ENCODE measurements at regions of chr11 and their contacts with region 1.

Region 1: DNA sequence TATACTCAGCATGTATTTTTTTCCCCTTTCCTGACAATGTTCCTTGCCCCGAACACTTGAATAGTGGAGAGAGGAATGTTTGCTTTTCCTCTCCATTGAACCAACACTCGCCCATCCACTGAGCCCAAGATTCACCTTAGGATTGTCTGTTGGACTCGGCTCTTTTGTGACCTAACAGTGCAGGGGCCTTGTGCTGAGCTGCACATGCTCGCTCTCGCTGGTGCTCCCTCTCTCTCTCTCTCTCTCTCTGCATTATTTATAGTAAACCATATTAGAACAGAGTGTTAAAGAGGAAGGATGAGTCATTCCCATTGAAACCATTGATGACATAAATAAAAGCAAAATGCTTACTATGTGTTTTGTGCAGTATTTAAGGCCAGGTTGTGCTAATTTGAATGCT is 20.7 kb downstream of the ZBTB16 start:
- DNase-seq: peak; percentile 75
- H3K4me3 Mint-ChIP-seq: peak overlapping the region; percentile 67
- H3K27ac Mint-ChIP-seq: peak overlapping the region; percentile 52
- H3K4me1 Mint-ChIP-seq: peaks cover 78% of the 10 kb centered on the region
- H3K27me3 Mint-ChIP-seq: no peaks in the 10 kb centered on the region
- CTCF ChIP-seq: no peak

Region 2: GRCh38 chr11:114053406-114053805 is 26.8 kb before region 1 on chr11:
- CTCF ChIA-PET with region 1: no interaction called
- POLR2A ChIA-PET with region 1: no interaction called
- intact Hi-C with region 1: no loop called
- DNase-seq: no peak
- H3K4me3 Mint-ChIP-seq: no peak overlapping the region
- H3K27ac Mint-ChIP-seq: no peak overlapping the region
- H3K4me1 Mint-ChIP-seq: peaks cover 9% of the 10 kb centered on the region
- H3K27me3 Mint-ChIP-seq: no peaks in the 10 kb centered on the region
- CTCF ChIP-seq: no peak

Region 3: DNA sequence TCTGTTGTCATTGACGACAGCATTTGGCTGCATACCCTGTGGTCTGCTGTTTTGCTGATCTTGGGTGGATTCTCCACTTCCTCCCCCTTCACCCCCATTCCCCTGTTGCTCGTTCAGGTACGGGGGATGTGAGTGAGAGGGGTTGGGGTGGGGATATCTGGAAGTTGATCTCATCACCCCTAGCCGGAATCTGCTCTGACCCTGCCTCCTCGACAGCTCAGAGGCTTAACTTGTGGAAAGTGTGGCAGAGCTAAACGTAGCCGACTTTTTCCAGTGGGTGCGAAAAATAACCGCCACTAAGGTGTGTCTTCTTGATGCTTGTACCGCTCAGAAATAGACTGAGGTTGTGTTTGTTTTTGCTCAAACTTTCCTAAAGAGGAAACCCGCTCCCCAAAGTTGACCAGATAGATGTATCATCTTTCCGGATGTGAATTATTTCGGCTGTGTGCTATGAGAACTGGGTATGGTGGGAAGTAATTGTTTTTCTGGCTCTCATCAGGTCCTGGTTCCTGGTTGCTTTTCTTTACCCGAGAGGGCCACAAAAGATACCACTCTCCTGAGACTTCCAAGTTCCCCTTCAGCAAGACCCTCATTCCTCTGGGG is 14.1 kb before region 1 on chr11:
- CTCF ChIA-PET with region 1: interaction called, 5 read pairs
- POLR2A ChIA-PET with region 1: interaction called, 14 read pairs
- intact Hi-C with region 1: no loop called
- DNase-seq: no peak
- H3K4me3 Mint-ChIP-seq: peak overlapping the region; percentile 95
- H3K27ac Mint-ChIP-seq: no peak overlapping the region
- H3K4me1 Mint-ChIP-seq: peaks cover 41% of the 10 kb centered on the region
- H3K27me3 Mint-ChIP-seq: no peaks in the 10 kb centered on the region
- CTCF ChIP-seq: no peak